Left lung (tissue), 14 donors: ENCODE measurements at regions of chr2 and their contacts with region 1.

Region 1: GRCh38 chr2:49767316-49767715 is 613.0 kb upstream of the FSHR start:
- DNase-seq: peak in 2 of 4 donors; percentile 18 to 32
- ATAC-seq: no peak
- H3K4me3 ChIP-seq: no peak overlapping the region
- H3K27ac ChIP-seq: no peak overlapping the region
- H3K4me1 ChIP-seq: no peaks in the 10 kb centered on the region
- H3K27me3 ChIP-seq: no peaks in the 10 kb centered on the region
- CTCF ChIP-seq: no peak

Region 2: DNA sequence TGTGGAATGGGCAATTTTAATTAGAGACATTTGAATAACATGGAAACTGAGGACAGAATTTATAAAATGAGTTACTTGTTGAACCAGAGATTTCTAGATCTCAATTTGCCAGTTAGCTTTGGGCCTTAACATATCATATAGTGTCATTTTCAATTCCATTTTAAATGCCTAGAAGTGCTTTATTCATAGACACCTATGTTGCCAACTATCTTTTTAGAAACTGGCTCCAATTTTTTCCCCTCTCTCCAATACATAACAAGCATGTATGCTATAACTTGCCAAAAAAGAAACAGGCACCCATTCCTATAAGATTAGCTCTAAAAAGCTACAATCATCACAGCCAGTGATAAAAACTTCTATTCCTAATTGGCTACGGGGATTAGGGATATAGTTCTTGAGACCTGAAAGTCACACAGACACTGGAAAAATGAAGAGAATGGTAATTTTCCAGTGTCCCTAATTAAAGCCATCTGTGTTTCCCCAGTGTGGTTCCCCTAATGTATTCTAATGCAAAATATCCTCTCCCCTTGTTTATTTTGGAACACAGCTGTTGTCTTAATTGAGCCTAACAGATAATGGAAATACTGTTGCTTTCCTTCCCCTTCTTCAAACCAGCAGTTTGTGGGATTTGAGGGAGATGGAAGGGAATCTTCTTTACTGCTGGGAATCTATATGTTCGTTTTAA is 407.5 kb before region 1 on chr2:
- intact Hi-C with region 1: no loop called
- DNase-seq: no peak
- ATAC-seq: no peak
- H3K4me3 ChIP-seq: no peak overlapping the region
- H3K27ac ChIP-seq: no peak overlapping the region
- H3K4me1 ChIP-seq: no peaks in the 10 kb centered on the region
- H3K27me3 ChIP-seq: no peaks in the 10 kb centered on the region
- CTCF ChIP-seq: no peak

Region 3: GRCh38 chr2:50077190-50077737 is 309.9 kb after region 1 on chr2:
- intact Hi-C with region 1: loop called in 1 of 2 experiments (anchors 10 kb)
- DNase-seq: no peak
- ATAC-seq: no peak
- H3K4me3 ChIP-seq: no peak overlapping the region
- H3K27ac ChIP-seq: no peak overlapping the region
- H3K4me1 ChIP-seq: no peaks in the 10 kb centered on the region
- H3K27me3 ChIP-seq: no peaks in the 10 kb centered on the region
- CTCF ChIP-seq: no peak